Colonic mucosa (tissue), 4 donors: ENCODE measurements at regions of chr4 and their contacts with region 1.

Region 1: DNA sequence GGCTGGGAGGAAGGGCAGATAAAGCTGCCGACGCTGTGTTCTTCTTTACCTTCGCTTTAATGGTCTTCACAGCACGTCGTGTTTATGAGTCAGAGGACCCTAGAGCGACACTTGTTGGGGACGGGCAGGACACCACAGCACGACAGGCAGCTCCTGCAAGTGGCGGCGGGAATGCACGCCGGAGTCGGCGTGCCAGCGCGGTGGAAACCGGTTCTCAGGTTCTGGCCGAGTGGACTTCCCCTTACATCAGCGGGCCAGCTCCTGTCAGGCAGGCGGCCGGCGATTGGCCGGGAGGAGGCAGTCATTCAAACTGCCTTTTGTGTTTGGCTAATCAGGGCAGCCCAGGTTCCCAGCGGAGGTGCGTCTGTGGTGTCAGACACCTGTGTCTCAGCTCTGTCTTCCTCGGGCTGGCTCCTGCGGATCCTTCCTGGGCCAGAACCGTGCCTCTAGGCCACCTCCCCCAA is 150.9 kb downstream of the SHROOM3 start:
- DNase-seq: peak; percentile 95
- H3K4me3 ChIP-seq: peak overlapping the region; percentile 34
- H3K27ac ChIP-seq: peak overlapping the region; percentile 60
- H3K4me1 ChIP-seq: peaks cover 3% of the 10 kb centered on the region
- H3K27me3 ChIP-seq: no peaks in the 10 kb centered on the region
- CTCF ChIP-seq: no peak

Region 2: DNA sequence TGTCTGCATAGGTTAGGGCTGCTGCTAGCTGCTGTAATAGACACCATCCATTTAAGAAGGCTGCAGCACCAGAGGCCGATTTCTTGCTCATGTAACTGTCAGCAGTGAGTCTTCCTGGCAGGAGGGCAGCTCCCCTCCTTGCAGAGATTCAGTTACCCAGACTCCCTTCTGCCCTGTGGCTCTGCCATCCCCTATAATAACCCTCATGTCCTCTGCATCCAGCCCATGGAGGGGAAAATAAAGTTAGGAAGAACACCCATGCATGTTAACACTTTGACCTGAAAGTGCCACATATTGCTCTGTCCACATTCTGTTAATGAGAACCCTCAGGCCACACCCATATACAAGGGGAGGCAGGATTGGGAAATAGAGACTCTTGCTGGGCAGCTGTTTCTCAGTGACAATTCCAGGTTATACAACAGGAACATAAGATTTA is 274.0 kb before region 1 on chr4:
- intact Hi-C with region 1: no loop called
- DNase-seq: no peak
- H3K4me3 ChIP-seq: no peak overlapping the region
- H3K27ac ChIP-seq: no peak overlapping the region
- H3K4me1 ChIP-seq: no peaks in the 10 kb centered on the region
- H3K27me3 ChIP-seq: no peaks in the 10 kb centered on the region
- CTCF ChIP-seq: no peak

Region 3: GRCh38 chr4:76626686-76627465 is 40.9 kb after region 1 on chr4:
- intact Hi-C with region 1: loop called (anchors 5 kb)
- DNase-seq: no peak
- H3K4me3 ChIP-seq: no peak overlapping the region
- H3K27ac ChIP-seq: peak overlapping the region; percentile 80
- H3K4me1 ChIP-seq: peaks cover 10% of the 10 kb centered on the region
- H3K27me3 ChIP-seq: no peaks in the 10 kb centered on the region
- CTCF ChIP-seq: no peak

Region 4: GRCh38 chr4:76689241-76689817 is 103.4 kb after region 1 on chr4:
- intact Hi-C with region 1: loop called (anchors 10 kb)
- DNase-seq: peak; percentile 58
- H3K4me3 ChIP-seq: peak overlapping the region; percentile 54
- H3K27ac ChIP-seq: peak overlapping the region; percentile 84
- H3K4me1 ChIP-seq: no peaks in the 10 kb centered on the region
- H3K27me3 ChIP-seq: no peaks in the 10 kb centered on the region
- CTCF ChIP-seq: no peak

Region 5: GRCh38 chr4:76905531-76905930 is 319.6 kb after region 1 on chr4:
- intact Hi-C with region 1: no loop called
- DNase-seq: no peak
- H3K4me3 ChIP-seq: no peak overlapping the region
- H3K27ac ChIP-seq: no peak overlapping the region
- H3K4me1 ChIP-seq: peaks cover 5% of the 10 kb centered on the region
- H3K27me3 ChIP-seq: no peaks in the 10 kb centered on the region
- CTCF ChIP-seq: no peak